ENCODE measurements at regions of chr9 and their contacts with region 1.

Region 1: GRCh38 chr9:116661037-116661954 is 25.8 kb upstream of the TRIM32 start:
- DNase-seq: peak in 4 of 5 donors; percentile 20 to 33 (median 28)
- H3K4me3 ChIP-seq: no peak overlapping the region
- H3K4me3 Mint-ChIP-seq: no peak overlapping the region
- H3K27ac ChIP-seq: no peak overlapping the region
- H3K27ac Mint-ChIP-seq: no peak overlapping the region
- H3K4me1 ChIP-seq: no peaks in the 10 kb centered on the region
- H3K4me1 Mint-ChIP-seq: no peaks in the 10 kb centered on the region
- H3K27me3 ChIP-seq: no peaks in the 10 kb centered on the region
- H3K27me3 Mint-ChIP-seq: no peaks in the 10 kb centered on the region

Region 2: DNA sequence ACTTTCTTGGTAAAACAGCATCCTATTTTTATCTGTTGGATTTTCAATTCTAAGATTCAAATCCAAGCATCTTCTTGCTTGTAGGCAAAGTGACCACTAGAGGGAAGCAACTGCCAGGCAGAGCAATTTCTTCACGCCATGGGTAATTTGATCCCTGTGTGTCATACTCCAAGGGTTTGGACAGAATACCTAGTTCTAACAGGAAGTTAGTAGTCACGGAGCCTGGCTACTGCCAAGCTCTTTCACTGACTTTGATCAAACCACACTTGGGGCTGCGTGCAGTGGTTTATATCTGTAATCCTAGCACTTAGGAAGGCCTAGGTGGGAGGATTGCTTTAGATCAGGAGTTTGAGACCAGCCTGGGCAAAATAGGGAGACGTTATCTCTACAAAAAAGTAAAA is 1069.7 kb before region 1 on chr9:
- CTCF ChIA-PET with region 1: interaction called, 10 read pairs
- POLR2A ChIA-PET with region 1: no interaction called
- intact Hi-C with region 1: no loop called
- DNase-seq: no peak
- H3K4me3 ChIP-seq: no peak overlapping the region
- H3K4me3 Mint-ChIP-seq: no peak overlapping the region
- H3K27ac ChIP-seq: no peak overlapping the region
- H3K27ac Mint-ChIP-seq: no peak overlapping the region
- H3K4me1 ChIP-seq: no peaks in the 10 kb centered on the region
- H3K4me1 Mint-ChIP-seq: peaks cover 0 to 4% (median under 1%) of the 10 kb centered on the region in 4 donors
- H3K27me3 ChIP-seq: no peaks in the 10 kb centered on the region
- H3K27me3 Mint-ChIP-seq: peaks cover 17 to 19% of the 10 kb centered on the region in 2 donors

Region 3: GRCh38 chr9:116494815-116495634 is 166.3 kb before region 1 on chr9:
- CTCF ChIA-PET with region 1: no interaction called
- POLR2A ChIA-PET with region 1: no interaction called
- intact Hi-C with region 1: loop called (anchors 10 kb)
- DNase-seq: peak in 2 of 5 donors; percentile 6 to 7
- H3K4me3 ChIP-seq: no peak overlapping the region
- H3K4me3 Mint-ChIP-seq: no peak overlapping the region
- H3K27ac ChIP-seq: no peak overlapping the region
- H3K27ac Mint-ChIP-seq: no peak overlapping the region
- H3K4me1 ChIP-seq: no peaks in the 10 kb centered on the region
- H3K4me1 Mint-ChIP-seq: no peaks in the 10 kb centered on the region
- H3K27me3 ChIP-seq: no peaks in the 10 kb centered on the region
- H3K27me3 Mint-ChIP-seq: no peaks in the 10 kb centered on the region

Region 4: DNA sequence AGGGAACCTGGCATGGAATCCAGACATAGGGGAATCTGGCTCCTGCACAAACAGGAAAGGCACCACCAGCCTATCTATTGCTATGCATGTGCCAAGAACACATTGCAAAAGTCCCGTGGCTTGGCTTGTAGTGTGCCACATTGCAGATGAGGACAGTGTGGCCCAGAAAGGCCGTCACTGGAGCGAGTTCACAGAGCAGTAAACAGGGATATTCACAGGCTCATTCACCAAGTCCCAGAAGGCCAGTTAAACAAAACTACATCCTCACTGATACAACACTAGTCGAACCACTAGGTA is 13.8 kb before region 1 on chr9:
- CTCF ChIA-PET with region 1: no interaction called
- POLR2A ChIA-PET with region 1: no interaction called
- intact Hi-C with region 1: no loop called
- DNase-seq: no peak
- H3K4me3 ChIP-seq: no peak overlapping the region
- H3K4me3 Mint-ChIP-seq: no peak overlapping the region
- H3K27ac ChIP-seq: no peak overlapping the region
- H3K27ac Mint-ChIP-seq: no peak overlapping the region
- H3K4me1 ChIP-seq: no peaks in the 10 kb centered on the region
- H3K4me1 Mint-ChIP-seq: no peaks in the 10 kb centered on the region
- H3K27me3 ChIP-seq: no peaks in the 10 kb centered on the region
- H3K27me3 Mint-ChIP-seq: no peaks in the 10 kb centered on the region

Region 5: DNA sequence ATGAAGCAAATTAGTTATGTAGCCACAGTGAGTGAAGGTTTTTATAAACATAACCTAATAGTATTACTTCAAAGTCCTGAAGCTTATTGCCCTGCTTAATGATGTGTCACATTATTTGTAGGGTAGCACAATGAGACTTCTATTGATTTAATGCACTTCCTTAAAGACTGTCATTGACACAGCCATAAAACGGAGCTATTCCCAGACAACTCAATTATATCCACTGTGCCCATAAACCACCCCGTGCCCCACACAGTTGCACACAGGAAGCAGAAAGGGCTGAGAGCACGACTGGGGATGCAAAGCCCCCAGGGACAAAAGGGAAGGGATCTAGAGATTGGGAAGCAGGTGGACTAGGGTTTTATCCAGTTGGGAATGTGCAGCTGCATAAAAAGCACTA is 62.8 kb after region 1 on chr9:
- CTCF ChIA-PET with region 1: no interaction called
- POLR2A ChIA-PET with region 1: no interaction called
- intact Hi-C with region 1: no loop called
- DNase-seq: no peak
- H3K4me3 ChIP-seq: no peak overlapping the region
- H3K4me3 Mint-ChIP-seq: no peak overlapping the region
- H3K27ac ChIP-seq: no peak overlapping the region
- H3K27ac Mint-ChIP-seq: no peak overlapping the region
- H3K4me1 ChIP-seq: no peaks in the 10 kb centered on the region
- H3K4me1 Mint-ChIP-seq: peaks cover 0 to 5% (median under 1%) of the 10 kb centered on the region in 4 donors
- H3K27me3 ChIP-seq: no peaks in the 10 kb centered on the region
- H3K27me3 Mint-ChIP-seq: peaks cover 0 to 3% of the 10 kb centered on the region in 2 donors

Measured in CD4-positive, alpha-beta memory T cell (primary cell).